ENCODE measurements at regions of chr6 and their contacts with region 1.

Region 1: GRCh38 chr6:41626917-41627316 is 11.4 kb upstream of the MDFI start:
- DNase-seq: peak; percentile 26
- H3K4me3 ChIP-seq: no peak overlapping the region
- H3K27ac ChIP-seq: no peak overlapping the region
- H3K4me1 ChIP-seq: peaks cover 0 to 8% (median 7%) of the 10 kb centered on the region in 4 donors
- H3K27me3 ChIP-seq: peaks cover 0 to 9% (median 0%) of the 10 kb centered on the region in 3 donors
- CTCF ChIP-seq: no peak
- EP300 ChIP-seq: no peak
- POLR2A ChIP-seq: no peak

Region 2: DNA sequence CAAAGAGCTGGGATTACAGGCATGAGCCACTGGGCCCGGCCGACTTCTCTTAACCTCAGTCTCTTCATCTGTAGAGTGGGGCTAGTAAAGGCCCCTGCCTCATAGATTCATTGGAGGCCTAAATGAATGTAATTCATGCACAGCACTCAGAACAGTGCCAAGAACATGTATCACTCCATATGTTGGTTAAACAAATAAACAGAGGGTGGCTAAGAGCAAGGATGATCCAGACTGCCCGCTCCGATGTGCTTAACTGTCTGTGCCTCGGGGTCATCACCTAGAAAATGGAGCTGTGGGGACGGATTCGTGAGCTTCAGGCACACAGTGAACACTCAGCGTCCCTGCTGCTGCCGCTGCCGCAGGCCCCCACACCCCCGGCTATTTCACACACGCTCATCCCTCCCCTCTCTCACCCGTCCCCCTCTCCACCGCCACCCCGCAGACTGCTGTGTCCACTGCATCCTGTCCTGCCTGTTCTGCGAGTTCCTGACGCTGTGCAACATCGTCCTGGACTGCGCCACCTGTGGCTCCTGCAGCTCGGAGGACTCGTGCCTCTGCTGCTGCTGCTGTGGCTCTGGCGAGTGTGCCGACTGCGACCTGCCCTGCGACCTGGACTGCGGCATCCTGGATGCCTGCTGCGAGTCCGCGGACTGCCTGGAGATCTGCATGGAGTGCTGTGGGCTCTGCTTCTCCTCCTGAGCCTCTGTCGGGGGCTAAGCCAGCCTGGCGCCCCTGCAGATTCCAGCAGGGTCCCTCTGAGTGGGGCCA is 26.1 kb after region 1 on chr6:
- intact Hi-C with region 1: loop called (anchors 2 kb)
- DNase-seq: no peak
- H3K4me3 ChIP-seq: no peak overlapping the region
- H3K27ac ChIP-seq: no peak overlapping the region
- H3K4me1 ChIP-seq: no peaks in the 10 kb centered on the region
- H3K27me3 ChIP-seq: peaks cover 0 to 4% (median 0%) of the 10 kb centered on the region in 3 donors
- CTCF ChIP-seq: no peak
- EP300 ChIP-seq: no peak
- POLR2A ChIP-seq: no peak